Vagina (tissue), 2 donors: ENCODE measurements at regions of chr17 and their contacts with region 1.

Region 1: GRCh38 chr17:77542551-77543490 is 402.1 kb downstream of the SEC14L1 start:
- DNase-seq: peak in 1 of 2 donors; percentile 90
- H3K4me3 ChIP-seq: no peak overlapping the region
- H3K27ac ChIP-seq: peak overlapping the region; percentile 31
- H3K4me1 ChIP-seq: peaks cover 15% of the 10 kb centered on the region
- H3K27me3 ChIP-seq: no peaks in the 10 kb centered on the region
- CTCF ChIP-seq: peak; percentile 67 to 90 (median 79)
- POLR2A ChIP-seq: no peak

Region 2: GRCh38 chr17:77429919-77430752 is 112.7 kb before region 1 on chr17:
- intact Hi-C with region 1: no loop called
- DNase-seq: peak in 1 of 2 donors; percentile 99
- H3K4me3 ChIP-seq: no peak overlapping the region
- H3K27ac ChIP-seq: peak overlapping the region; percentile 98
- H3K4me1 ChIP-seq: peaks cover 100% of the 10 kb centered on the region
- H3K27me3 ChIP-seq: no peaks in the 10 kb centered on the region
- CTCF ChIP-seq: peak; percentile 66 to 89 (median 74)
- POLR2A ChIP-seq: no peak

Region 3: DNA sequence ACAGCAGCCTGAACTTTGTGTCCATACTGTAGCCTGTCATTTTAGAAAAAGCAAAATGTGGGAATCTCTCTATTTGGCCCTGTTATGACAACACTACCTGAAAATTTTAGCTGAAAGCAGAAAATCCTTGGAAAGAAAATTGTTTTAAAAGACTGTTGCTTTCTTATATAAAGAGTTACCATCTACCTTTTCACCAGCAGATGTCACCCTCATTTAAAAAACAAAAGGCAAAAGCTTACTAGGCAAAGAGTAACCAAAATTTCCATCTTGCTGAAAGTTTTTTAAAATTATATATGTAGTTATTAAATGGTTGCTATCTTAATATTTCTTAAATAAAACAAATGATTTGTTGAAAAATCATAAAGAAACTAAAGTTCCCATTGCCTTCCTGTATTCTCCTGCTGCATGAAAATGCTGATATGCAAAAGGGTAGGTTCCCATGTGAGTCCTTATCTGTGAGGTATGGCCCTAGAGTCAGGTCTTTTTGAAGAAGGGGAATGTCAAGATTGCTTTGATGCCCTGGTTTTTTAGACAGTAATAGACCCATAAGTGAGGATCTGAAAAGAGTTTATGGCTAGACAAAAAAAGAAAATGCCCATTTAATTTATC is 476.6 kb after region 1 on chr17:
- intact Hi-C with region 1: loop called (anchors 5 kb)
- DNase-seq: no peak
- H3K4me3 ChIP-seq: no peak overlapping the region
- H3K27ac ChIP-seq: no peak overlapping the region
- H3K4me1 ChIP-seq: peaks cover 12% of the 10 kb centered on the region
- H3K27me3 ChIP-seq: no peaks in the 10 kb centered on the region
- CTCF ChIP-seq: peak; percentile 21 to 54 (median 45)
- POLR2A ChIP-seq: no peak